ENCODE measurements at regions of chr14 and their contacts with region 1.

Region 1: DNA sequence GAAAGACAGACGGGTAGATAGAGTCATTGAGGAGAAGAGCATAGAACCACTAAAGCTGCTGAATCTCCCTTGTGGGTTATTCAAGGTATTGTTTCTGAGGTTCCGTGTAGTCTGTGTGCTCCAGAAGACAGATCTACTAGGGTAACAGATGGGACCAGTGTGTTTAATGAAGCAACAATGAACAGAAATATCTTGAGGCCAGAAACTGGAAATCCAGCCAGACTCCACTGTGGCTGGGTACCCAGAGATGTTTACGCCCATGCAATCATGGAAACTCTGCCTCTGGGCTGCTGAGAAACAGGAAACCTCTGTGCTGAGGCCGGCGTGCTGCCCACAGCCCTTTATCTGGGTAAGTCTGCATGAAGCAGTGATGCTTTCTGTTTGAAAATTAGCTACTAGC is 8.3 kb downstream of the PROX2 start:
- DNase-seq: peak; percentile 72
- H3K4me3 Mint-ChIP-seq: no peak overlapping the region
- H3K27ac Mint-ChIP-seq: peak overlapping the region; percentile 66
- H3K4me1 Mint-ChIP-seq: peaks cover 24% of the 10 kb centered on the region
- H3K27me3 Mint-ChIP-seq: no peaks in the 10 kb centered on the region

Region 2: DNA sequence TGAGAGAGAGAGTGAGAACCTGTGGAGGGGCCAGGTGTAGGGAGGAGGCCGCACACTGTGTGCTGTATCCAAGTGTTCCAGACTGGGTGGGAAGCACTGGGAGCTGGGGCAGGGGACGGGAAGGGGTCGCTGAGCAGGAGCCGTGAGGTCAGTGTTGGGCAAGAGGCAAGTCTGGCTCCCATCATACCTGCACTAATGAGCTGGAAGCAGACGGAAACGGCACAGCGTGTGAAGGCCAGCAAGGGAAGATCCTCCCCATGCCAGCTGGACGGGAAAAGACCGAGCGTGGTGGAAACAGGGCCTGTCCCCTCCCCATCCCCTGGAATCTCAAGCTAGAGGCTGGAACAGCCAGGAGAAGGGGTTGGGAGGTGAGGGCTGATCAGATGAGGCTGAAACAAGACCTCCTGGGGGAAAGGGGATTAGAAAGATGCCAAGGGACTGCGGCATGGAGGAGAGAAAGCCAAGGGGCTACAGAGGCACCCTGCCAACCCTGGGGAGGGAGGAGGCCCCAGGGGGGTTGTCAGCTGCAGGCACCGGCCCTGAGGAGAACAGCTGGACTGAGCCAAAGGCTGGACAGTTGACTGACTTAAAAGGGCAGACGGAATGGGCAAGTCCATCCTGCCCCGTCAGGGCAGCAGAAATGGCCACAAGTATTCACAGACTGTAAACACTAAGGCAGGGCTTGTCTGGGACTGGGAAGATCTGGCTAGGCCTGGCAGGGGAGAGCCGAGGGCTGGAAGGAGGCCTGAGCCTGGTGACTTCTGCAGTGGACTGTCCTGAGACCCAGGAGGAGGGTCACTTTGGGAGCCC is 236.6 kb before region 1 on chr14:
- CTCF ChIA-PET with region 1: no interaction called
- POLR2A ChIA-PET with region 1: no interaction called
- DNase-seq: no peak
- H3K4me3 Mint-ChIP-seq: no peak overlapping the region
- H3K27ac Mint-ChIP-seq: no peak overlapping the region
- H3K4me1 Mint-ChIP-seq: peaks cover 2% of the 10 kb centered on the region
- H3K27me3 Mint-ChIP-seq: peaks cover 7% of the 10 kb centered on the region

Region 3: DNA sequence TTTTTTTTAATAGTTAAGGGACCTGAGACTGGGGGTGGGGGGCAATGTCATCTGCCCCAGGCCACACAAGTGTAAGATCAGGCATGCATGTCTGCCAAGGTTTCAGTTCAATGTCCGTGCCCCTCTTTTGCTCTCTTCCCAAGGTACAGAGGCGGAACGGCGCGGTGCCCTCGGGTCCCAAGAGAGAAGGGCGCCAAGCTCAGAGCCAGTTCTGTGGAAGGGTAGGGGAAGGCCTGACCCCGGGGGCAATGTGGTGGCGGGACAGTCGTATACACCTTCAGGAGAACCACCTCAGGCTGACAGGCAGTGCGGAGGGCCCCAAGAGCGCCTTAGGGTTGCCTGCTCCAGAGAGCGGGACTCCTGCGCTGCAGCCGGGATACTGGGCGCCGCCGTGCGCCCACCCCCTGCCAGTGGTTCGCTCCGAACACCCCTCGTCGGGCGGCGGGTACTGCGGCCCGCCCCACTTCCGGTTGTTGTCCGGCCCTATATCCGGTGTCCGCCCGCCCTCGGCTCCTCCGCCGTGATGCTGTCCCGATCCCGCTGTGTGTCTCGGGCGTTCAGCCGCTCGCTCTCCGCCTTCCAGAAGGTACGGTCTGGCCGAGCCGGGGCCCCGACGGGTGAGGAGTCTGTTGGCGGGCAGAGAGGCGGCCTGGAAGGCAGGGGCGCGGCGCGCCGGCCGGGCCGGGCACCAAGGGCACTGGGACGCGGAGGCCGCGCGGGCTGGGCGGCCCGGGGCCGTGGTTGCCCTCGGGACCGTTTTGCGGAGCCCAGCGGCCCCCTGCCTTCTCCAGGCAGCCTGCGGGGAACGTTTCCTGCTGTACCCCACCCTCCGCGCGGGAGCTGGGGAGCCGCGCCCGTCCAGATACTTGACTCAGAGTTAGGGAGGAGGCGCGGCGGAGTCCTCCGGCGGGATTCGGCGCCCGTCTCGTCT is 14.0 kb after region 1 on chr14 and contains the start of gene DLST:
- CTCF ChIA-PET with region 1: interaction called, 66 read pairs
- POLR2A ChIA-PET with region 1: no interaction called
- DNase-seq: peak; percentile 85
- H3K4me3 Mint-ChIP-seq: peak within 1 kb of the TSS; percentile 100
- H3K27ac Mint-ChIP-seq: peak within 1 kb of the TSS; percentile 98
- H3K4me1 Mint-ChIP-seq: peaks cover 58% of the 10 kb centered on the region
- H3K27me3 Mint-ChIP-seq: no peaks in the 10 kb centered on the region
- total RNA-seq, gene DLST: 92.6 to 106 TPM

Measured in activated CD4-positive, alpha-beta T cell treated with anti-CD3 and anti-CD28 coated beads, Interleukin-2, amount 10 ng/mL, durations not matched to agents 7 days and 5 days (primary cell).